Activated T-helper 2 cell treated with anti-CD3 and anti-CD28 coated beads, Interferon-gamma antibody, Interleukin-2, Interleukin-4, amounts not matched to agents 10 μg/mL and 5 μg/mL and 100 μg/mL, durations not matched to agents 14 hours and 24 hours and 36 hours (primary cell): ENCODE measurements at regions of chr9 and their contacts with region 1.

Region 1: DNA sequence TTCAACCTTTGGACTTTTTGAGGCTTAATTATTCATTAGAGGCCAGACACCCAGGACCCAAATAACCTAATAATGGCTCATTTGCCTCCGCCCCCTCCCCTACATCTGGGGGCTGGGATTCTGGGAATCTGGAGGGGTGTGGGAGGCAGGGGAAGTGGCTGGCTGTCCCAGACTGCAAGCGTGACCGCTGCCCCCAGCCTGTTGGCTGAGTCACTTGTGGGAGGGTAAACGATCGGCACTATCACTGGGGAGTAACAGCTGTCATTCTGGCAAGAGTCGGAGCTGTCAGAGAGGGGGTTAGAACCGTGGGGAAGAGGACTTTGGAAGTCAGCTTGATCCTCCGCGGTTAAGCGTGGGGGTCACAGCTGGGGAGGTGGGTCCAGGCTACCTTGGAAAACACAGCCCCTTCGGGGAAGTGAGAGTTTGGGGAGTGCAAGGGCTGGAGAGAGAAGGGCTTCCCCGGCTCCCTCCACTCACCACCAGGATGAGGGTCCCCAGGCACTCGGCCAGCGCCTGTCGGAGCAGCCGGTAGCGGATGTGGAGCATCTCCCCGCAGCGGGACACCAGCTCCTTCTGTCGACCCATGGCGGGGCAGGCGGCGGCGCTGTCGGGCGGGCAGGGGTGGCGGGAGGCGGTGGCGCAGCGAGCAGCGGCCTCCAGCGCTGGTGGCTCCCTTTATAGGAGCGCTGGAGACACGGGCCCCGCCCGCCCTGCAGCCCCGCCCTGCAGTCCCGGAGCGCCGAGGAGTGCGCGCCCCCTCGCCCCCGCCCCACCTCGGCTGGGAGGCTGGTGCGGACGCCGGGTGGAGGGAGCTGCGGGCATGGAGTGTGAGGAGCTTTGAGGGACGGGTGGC is at the start of gene AQP3:
- DNase-seq: peak; percentile 75
- H3K4me3 Mint-ChIP-seq: peak within 1 kb of the TSS; percentile 81
- H3K27ac Mint-ChIP-seq: peak within 1 kb of the TSS; percentile 79
- H3K4me1 Mint-ChIP-seq: peaks cover 26% of the 10 kb centered on the region
- H3K27me3 Mint-ChIP-seq: no peaks in the 10 kb centered on the region
- total RNA-seq, gene AQP3: 2.1 TPM in 2 replicates

Region 2: DNA sequence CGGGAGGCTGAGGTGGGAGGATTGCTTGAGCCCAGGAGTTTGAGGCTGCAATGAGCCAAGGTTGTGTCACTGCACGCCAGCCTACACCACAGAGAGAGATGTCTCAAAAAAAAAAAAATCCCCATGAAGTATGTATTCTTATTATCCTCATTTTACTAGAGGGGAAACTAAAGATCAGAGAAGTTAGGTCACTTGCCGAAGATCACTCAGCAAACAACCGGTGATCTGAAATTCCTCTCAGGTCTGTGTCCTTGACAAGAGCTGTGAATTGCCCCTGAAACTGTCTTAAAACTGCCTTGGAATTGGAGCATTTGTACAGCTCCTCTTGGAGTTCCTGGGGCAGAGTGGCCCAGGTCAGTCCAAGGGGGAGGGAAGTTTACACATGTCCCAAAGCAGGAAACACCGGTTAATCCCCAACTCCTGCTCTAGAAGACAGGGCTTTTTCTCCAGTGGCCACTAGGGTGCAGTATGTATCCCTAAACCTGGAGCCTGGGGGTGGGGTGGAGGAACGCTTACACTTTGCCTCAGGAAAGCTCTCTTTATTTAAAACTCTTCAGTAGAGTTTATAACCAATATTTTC is 72.4 kb before region 1 on chr9:
- intact Hi-C with region 1: loop called (anchors 2 kb)
- DNase-seq: peak; percentile 57
- H3K4me3 Mint-ChIP-seq: no peak overlapping the region
- H3K27ac Mint-ChIP-seq: peak overlapping the region; percentile 39
- H3K4me1 Mint-ChIP-seq: peaks cover 10% of the 10 kb centered on the region
- H3K27me3 Mint-ChIP-seq: no peaks in the 10 kb centered on the region

Region 3: DNA sequence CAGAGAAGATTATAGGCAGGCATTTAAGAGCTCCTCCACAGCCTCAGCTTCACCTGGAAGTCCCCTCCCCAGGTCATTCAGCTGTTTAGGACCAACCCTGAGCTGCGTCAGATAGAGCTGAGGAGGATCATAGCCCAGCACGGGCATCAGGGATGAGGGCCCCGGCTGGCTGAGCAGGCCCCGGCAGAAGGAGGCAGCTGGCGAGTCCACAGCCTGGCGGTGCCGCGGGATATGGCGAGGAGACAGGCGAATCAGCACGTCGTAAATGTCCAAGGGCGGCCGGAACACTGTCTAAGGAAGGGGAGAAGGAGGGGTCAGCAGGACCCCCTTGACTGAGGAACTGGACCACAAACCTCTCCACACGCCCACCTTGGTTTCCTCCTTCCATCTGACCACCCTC is 16.0 kb after region 1 on chr9:
- intact Hi-C with region 1: no loop called
- DNase-seq: no peak
- H3K4me3 Mint-ChIP-seq: no peak overlapping the region
- H3K27ac Mint-ChIP-seq: no peak overlapping the region
- H3K4me1 Mint-ChIP-seq: peaks cover 10% of the 10 kb centered on the region
- H3K27me3 Mint-ChIP-seq: no peaks in the 10 kb centered on the region

Region 4: DNA sequence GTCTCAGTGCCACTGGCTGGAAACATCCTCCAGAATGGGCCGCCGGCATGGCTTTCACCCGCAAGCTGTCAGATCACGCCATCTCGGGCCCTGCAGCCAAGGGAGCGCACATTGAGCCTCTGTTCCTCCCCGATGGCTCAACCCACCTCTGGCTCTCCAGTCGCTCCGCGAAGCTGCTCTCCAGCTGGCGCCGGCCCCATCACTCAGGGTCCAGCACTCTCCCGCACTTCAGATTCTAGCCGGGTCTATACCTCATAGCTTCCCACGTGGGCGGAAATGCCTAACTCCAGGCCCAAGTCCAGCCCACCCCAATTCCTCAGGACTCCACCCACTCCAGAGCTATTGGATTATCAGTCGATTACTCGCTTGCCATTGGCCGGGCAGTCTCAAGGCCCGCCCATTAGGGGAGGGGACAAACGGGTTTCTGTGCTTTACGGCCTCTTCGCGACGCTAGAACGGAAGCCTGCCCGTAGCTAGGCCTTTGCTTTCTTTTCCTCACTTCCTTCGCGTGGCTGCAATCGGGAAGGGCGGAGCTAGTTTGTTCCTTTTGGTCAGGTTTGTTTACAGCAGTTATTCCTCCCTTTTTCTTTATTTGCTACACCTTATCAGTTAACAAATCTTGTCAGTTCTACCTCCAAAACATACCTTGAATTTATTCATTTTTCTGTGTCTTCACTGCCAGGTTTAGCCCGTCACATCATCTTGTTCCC is 26.6 kb after region 1 on chr9 and contains the start of gene NOL6:
- intact Hi-C with region 1: loop called (anchors 1 kb)
- DNase-seq: peak; percentile 98
- H3K4me3 Mint-ChIP-seq: peak within 1 kb of the TSS; percentile 98
- H3K27ac Mint-ChIP-seq: peak within 1 kb of the TSS; percentile 92
- H3K4me1 Mint-ChIP-seq: peaks cover 21% of the 10 kb centered on the region
- H3K27me3 Mint-ChIP-seq: no peaks in the 10 kb centered on the region
- total RNA-seq, gene NOL6: 61.9 and 65.3 TPM in 2 replicates

Region 5: GRCh38 chr9:33489066-33489465 is 41.9 kb after region 1 on chr9:
- intact Hi-C with region 1: no loop called
- DNase-seq: no peak
- H3K4me3 Mint-ChIP-seq: no peak overlapping the region
- H3K27ac Mint-ChIP-seq: no peak overlapping the region
- H3K4me1 Mint-ChIP-seq: no peaks in the 10 kb centered on the region
- H3K27me3 Mint-ChIP-seq: peaks cover 12% of the 10 kb centered on the region